ENCODE measurements at regions of chr1 and their contacts with region 1.

Region 1: GRCh38 chr1:56411484-56412180 is 167.7 kb downstream of the PLPP3 start:
- DNase-seq: no peak
- H3K4me3 ChIP-seq: no peak overlapping the region
- H3K27ac ChIP-seq: peak overlapping the region in 1 of 4 donors; percentile 10
- H3K4me1 ChIP-seq: peaks cover 3 to 17% (median 5%) of the 10 kb centered on the region in 3 donors
- H3K27me3 ChIP-seq: no peaks in the 10 kb centered on the region
- CTCF ChIP-seq: no peak
- POLR2A ChIP-seq: no peak

Region 2: GRCh38 chr1:56550138-56550858 is 138.7 kb after region 1 on chr1:
- intact Hi-C with region 1: loop called (anchors 10 kb)
- DNase-seq: no peak
- H3K4me3 ChIP-seq: no peak overlapping the region
- H3K27ac ChIP-seq: peak overlapping the region in 1 of 4 donors; percentile 23
- H3K4me1 ChIP-seq: peaks cover 21 to 88% (median 37%) of the 10 kb centered on the region in 3 donors
- H3K27me3 ChIP-seq: no peaks in the 10 kb centered on the region
- CTCF ChIP-seq: no peak
- POLR2A ChIP-seq: no peak

Measured in esophagus squamous epithelium (tissue), 5 donors.